T-cell (primary cell): ENCODE measurements at regions of chrX and their contacts with region 1.

Region 1: GRCh38 chrX:41684138-41684537 is 4.6 kb upstream of the GPR34 start:
- DNase-seq: no peak
- ATAC-seq: no peak
- H3K4me3 ChIP-seq: no peak overlapping the region
- H3K4me3 Mint-ChIP-seq: no peak overlapping the region
- H3K27ac ChIP-seq: no peak overlapping the region
- H3K27ac Mint-ChIP-seq: no peak overlapping the region
- H3K4me1 ChIP-seq: peaks cover 0 to 6% of the 10 kb centered on the region in 2 experiments
- H3K4me1 Mint-ChIP-seq: peaks cover 0 to 16% (median 4%) of the 10 kb centered on the region in 3 donors
- H3K27me3 ChIP-seq: no peaks in the 10 kb centered on the region
- H3K27me3 Mint-ChIP-seq: peaks cover 0 to 10% of the 10 kb centered on the region in 2 donors

Region 2: GRCh38 chrX:41695426-41695825 is 11.3 kb after region 1 on chrX:
- CTCF ChIA-PET with region 1: no interaction called
- POLR2A ChIA-PET with region 1: no interaction called
- DNase-seq: peak in 19 of 35 experiments; percentile 1 to 47 (median 7)
- ATAC-seq: peak in 2 of 4 experiments; percentile 35 to 39
- H3K4me3 ChIP-seq: no peak overlapping the region
- H3K4me3 Mint-ChIP-seq: peak overlapping the region in 1 of 3 donors; percentile 10
- H3K27ac ChIP-seq: no peak overlapping the region
- H3K27ac Mint-ChIP-seq: peak overlapping the region in 1 of 2 donors; percentile 16
- H3K4me1 ChIP-seq: peaks cover 2 to 17% of the 10 kb centered on the region in 2 experiments
- H3K4me1 Mint-ChIP-seq: peaks cover 30 to 45% (median 38%) of the 10 kb centered on the region in 3 donors
- H3K27me3 ChIP-seq: no peaks in the 10 kb centered on the region
- H3K27me3 Mint-ChIP-seq: peaks cover 0 to 4% of the 10 kb centered on the region in 2 donors

Region 3: GRCh38 chrX:41750716-41751115 is 66.6 kb after region 1 on chrX:
- CTCF ChIA-PET with region 1: interaction called in 1 of 2 experiments, 3 read pairs
- POLR2A ChIA-PET with region 1: interaction called in 1 of 2 experiments, 14 read pairs
- DNase-seq: no peak
- ATAC-seq: no peak
- H3K4me3 ChIP-seq: no peak overlapping the region
- H3K4me3 Mint-ChIP-seq: no peak overlapping the region
- H3K27ac ChIP-seq: no peak overlapping the region
- H3K27ac Mint-ChIP-seq: no peak overlapping the region
- H3K4me1 ChIP-seq: peaks cover 0 to 2% of the 10 kb centered on the region in 2 experiments
- H3K4me1 Mint-ChIP-seq: peaks cover 0 to 3% (median 0%) of the 10 kb centered on the region in 3 donors
- H3K27me3 ChIP-seq: no peaks in the 10 kb centered on the region
- H3K27me3 Mint-ChIP-seq: no peaks in the 10 kb centered on the region

Region 4: GRCh38 chrX:41881166-41881565 is 197.0 kb after region 1 on chrX:
- CTCF ChIA-PET with region 1: no interaction called
- POLR2A ChIA-PET with region 1: interaction called in 1 of 2 experiments, 11 read pairs
- DNase-seq: no peak
- ATAC-seq: no peak
- H3K4me3 ChIP-seq: no peak overlapping the region
- H3K4me3 Mint-ChIP-seq: no peak overlapping the region
- H3K27ac ChIP-seq: no peak overlapping the region
- H3K27ac Mint-ChIP-seq: peak overlapping the region in 1 of 2 donors; percentile 27
- H3K4me1 ChIP-seq: peaks cover 2 to 8% of the 10 kb centered on the region in 2 experiments
- H3K4me1 Mint-ChIP-seq: peaks cover 26 to 68% (median 60%) of the 10 kb centered on the region in 3 donors
- H3K27me3 ChIP-seq: no peaks in the 10 kb centered on the region
- H3K27me3 Mint-ChIP-seq: peaks cover 0 to 12% of the 10 kb centered on the region in 2 donors